Endothelial cell of umbilical vein (primary cell): ENCODE measurements at regions of chr22 and their contacts with region 1.

Region 1: DNA sequence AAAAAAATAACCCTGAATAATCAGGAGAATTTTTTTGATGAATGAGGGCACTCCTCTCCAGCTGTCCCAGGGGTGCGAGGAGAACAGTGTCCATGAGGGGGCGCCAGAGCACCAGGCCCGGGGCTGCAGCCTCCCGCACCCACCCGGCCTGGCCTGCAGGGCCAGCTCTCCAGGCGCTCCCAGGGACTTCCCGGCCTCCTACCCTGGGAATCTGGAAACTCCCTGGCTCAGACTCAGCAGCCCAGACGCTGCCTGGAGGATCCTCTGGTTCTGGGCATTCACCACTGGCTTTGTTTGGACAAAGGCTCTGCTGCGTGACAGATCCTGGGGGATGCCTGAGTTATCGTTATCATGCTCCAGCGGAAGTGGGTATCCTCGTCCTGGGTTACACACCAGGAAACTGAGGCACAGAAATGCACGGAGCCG is 31.0 kb downstream of the MCM5 start:
- DNase-seq: peak; percentile 90
- H3K4me3 ChIP-seq: no peak overlapping the region
- H3K27ac ChIP-seq: peak overlapping the region; percentile 23
- H3K4me1 ChIP-seq: no peaks in the 10 kb centered on the region
- H3K27me3 ChIP-seq: no peaks in the 10 kb centered on the region
- CTCF ChIP-seq: peak; percentile 97 to 98
- POLR2A ChIP-seq: no peak

Region 2: DNA sequence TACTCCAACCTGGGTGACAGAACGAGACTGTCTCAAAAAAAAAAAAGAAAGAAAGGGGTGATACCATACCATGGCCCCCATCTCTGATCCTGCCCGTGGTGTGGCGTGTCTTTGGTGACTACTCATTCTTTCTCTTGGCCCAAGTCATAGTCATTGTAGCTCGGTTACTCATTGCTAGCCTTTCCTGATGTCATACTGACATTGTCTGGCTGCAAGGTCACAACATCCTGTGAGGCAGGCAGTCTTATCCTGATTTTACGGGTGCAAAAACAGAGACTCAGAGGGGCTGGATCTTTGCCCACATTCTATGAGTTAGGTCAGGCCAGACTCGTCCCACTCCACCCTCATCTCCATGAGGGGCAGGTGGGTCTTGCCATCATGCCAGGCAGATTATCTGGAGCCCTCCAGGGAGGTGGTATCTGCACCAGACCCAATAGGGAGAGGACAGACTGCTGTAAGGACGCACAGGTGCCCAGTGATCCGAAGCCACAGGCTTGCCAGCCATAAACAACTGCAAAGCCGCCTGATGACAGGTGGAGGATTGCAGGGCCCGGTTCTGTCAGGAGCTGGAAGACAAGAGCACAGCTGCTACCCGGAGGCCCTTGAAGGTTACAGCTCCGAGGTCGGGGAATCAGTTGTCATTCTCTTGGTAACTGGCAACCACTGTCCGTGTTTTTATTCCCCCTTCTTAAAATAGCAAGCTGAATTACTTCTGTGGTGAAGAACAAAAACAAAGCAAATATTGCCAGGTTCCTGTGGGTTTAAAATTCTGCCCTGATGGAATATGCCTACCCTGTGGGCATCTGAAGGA is 117.4 kb before region 1 on chr22:
- CTCF ChIA-PET with region 1: no interaction called
- POLR2A ChIA-PET with region 1: no interaction called
- dilution Hi-C with region 1: no loop called
- intact Hi-C with region 1: no loop called
- DNase-seq: peak; percentile 93
- H3K4me3 ChIP-seq: no peak overlapping the region
- H3K27ac ChIP-seq: peak overlapping the region; percentile 98
- H3K4me1 ChIP-seq: peaks cover 37% of the 10 kb centered on the region
- H3K27me3 ChIP-seq: no peaks in the 10 kb centered on the region
- CTCF ChIP-seq: no peak
- POLR2A ChIP-seq: no peak

Region 3: GRCh38 chr22:35418088-35418487 is 12.8 kb before region 1 on chr22:
- CTCF ChIA-PET with region 1: interaction called, 27 read pairs
- POLR2A ChIA-PET with region 1: no interaction called
- dilution Hi-C with region 1: no loop called
- intact Hi-C with region 1: no loop called
- DNase-seq: no peak
- H3K4me3 ChIP-seq: no peak overlapping the region
- H3K27ac ChIP-seq: no peak overlapping the region
- H3K4me1 ChIP-seq: no peaks in the 10 kb centered on the region
- H3K27me3 ChIP-seq: no peaks in the 10 kb centered on the region
- CTCF ChIP-seq: no peak
- POLR2A ChIP-seq: no peak

Region 4: GRCh38 chr22:35521358-35522224 is 90.7 kb after region 1 on chr22:
- CTCF ChIA-PET with region 1: interaction called, 10 read pairs
- POLR2A ChIA-PET with region 1: no interaction called
- dilution Hi-C with region 1: no loop called
- intact Hi-C with region 1: no loop called
- DNase-seq: peak; percentile 76
- H3K4me3 ChIP-seq: no peak overlapping the region
- H3K27ac ChIP-seq: no peak overlapping the region
- H3K4me1 ChIP-seq: peaks cover 4% of the 10 kb centered on the region
- H3K27me3 ChIP-seq: peaks cover 4 to 18% of the 10 kb centered on the region in 2 experiments
- CTCF ChIP-seq: no peak
- POLR2A ChIP-seq: no peak

Region 5: GRCh38 chr22:35564975-35565867 is 134.3 kb after region 1 on chr22:
- CTCF ChIA-PET with region 1: interaction called, 10 read pairs
- POLR2A ChIA-PET with region 1: no interaction called
- dilution Hi-C with region 1: no loop called
- intact Hi-C with region 1: no loop called
- DNase-seq: no peak
- H3K4me3 ChIP-seq: no peak overlapping the region
- H3K27ac ChIP-seq: no peak overlapping the region
- H3K4me1 ChIP-seq: no peaks in the 10 kb centered on the region
- H3K27me3 ChIP-seq: peaks cover 0 to 8% of the 10 kb centered on the region in 2 experiments
- CTCF ChIP-seq: no peak
- POLR2A ChIP-seq: no peak

Region 6: GRCh38 chr22:35590634-35591295 is 159.9 kb after region 1 on chr22:
- CTCF ChIA-PET with region 1: interaction called, 196 read pairs
- POLR2A ChIA-PET with region 1: no interaction called
- dilution Hi-C with region 1: no loop called
- intact Hi-C with region 1: no loop called
- DNase-seq: no peak
- H3K4me3 ChIP-seq: no peak overlapping the region
- H3K27ac ChIP-seq: no peak overlapping the region
- H3K4me1 ChIP-seq: no peaks in the 10 kb centered on the region
- H3K27me3 ChIP-seq: peaks cover 0 to 2% of the 10 kb centered on the region in 2 experiments
- CTCF ChIP-seq: no peak
- POLR2A ChIP-seq: no peak

Region 7: DNA sequence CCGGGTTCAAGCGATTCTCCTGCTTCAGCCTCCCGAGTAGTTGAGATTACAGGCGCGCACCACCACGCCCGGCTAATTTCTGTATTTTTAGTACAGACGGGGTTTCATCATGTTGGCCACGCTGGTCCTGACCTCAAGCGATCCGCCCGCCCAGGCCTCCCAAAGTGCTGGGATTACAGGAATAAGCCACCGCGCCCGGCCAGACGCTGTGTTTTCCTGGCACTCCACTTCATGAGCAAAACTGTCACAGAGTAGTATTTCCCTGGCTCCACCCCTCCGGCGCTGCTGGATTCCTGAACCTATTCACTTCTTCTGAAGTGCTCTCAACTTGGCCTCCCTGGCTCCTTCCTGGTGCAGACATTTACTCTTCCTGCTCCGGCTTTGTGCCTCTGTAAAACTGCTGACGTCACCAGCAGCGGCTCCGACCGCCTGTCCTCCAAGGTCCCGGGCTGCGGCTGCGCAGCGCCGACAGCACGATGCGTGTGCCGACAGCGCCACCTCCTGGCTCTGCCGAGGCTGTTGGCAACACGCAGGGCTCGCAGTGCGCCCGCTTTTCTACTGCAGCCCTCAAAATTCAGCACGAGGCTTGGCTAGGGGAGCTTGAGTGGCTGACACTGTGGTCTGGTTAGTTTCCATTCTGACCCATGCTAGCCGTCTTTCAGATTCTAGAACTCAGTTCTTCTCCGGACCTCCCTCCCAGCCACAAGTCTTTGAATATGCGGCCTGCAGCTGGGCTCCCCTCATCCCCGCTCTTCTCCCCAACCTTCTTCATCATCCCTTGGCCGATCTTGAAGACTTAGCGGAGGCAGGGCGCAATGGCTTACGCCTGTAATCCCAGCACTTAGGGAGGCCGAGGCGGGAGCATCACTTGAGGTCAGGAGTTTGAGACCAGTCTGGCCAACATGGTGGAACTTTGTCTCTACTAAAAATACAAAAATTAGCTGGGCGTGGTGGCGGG is 693.0 kb after region 1 on chr22:
- CTCF ChIA-PET with region 1: interaction called, 6 read pairs
- POLR2A ChIA-PET with region 1: no interaction called
- dilution Hi-C with region 1: no loop called
- intact Hi-C with region 1: loop called (anchors 1 kb)
- DNase-seq: peak; percentile 96
- H3K4me3 ChIP-seq: no peak overlapping the region
- H3K27ac ChIP-seq: peak overlapping the region; percentile 18
- H3K4me1 ChIP-seq: no peaks in the 10 kb centered on the region
- H3K27me3 ChIP-seq: no peaks in the 10 kb centered on the region
- CTCF ChIP-seq: peak; percentile 98 to 99
- POLR2A ChIP-seq: no peak